AG04449 (cell line): ENCODE measurements at regions of chr7 and their contacts with region 1.

Region 1: DNA sequence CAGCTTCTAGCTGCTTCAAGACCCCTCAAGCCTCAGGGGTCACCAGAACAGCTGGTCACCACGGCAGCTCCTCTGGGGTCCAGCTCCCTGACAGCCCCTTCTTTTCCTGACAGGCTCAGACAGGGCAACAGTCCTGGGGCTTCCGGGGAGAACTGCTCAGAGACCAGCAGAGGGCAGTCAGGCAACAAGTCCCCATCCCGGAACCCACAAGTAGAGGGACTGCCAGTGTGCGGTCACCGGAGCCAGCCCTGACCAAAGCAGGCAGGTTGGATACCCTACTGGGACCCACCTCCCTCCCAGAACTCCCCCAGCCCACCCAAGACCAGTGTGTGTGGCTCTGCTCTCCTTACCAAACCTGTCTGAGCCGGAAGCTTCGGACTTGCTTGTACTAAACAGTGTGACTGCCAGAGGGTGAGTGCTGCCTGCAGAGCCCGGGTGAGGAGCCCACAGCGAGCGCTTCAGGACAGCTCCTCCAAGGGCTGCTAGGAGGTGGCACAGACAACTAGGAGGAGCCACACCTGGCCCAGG is 40.3 kb downstream of the YKT6 start:
- DNase-seq: peak; percentile 5
- H3K4me3 ChIP-seq: peak overlapping the region; percentile 6; the same call in 1 of the 2 replicates
- CTCF ChIP-seq: peak; percentile 94

Region 2: GRCh38 chr7:44218418-44219201 is 22.4 kb before region 1 on chr7:
- CTCF ChIA-PET with region 1: interaction called, 14 read pairs
- POLR2A ChIA-PET with region 1: no interaction called
- DNase-seq: no peak
- H3K4me3 ChIP-seq: no peak overlapping the region
- CTCF ChIP-seq: peak; percentile 10

Region 3: GRCh38 chr7:44257618-44258422 is 16.8 kb after region 1 on chr7:
- CTCF ChIA-PET with region 1: interaction called, 40 read pairs
- POLR2A ChIA-PET with region 1: interaction called, 3 read pairs
- DNase-seq: peak; percentile 49
- H3K4me3 ChIP-seq: no peak overlapping the region
- CTCF ChIP-seq: no peak

Region 4: DNA sequence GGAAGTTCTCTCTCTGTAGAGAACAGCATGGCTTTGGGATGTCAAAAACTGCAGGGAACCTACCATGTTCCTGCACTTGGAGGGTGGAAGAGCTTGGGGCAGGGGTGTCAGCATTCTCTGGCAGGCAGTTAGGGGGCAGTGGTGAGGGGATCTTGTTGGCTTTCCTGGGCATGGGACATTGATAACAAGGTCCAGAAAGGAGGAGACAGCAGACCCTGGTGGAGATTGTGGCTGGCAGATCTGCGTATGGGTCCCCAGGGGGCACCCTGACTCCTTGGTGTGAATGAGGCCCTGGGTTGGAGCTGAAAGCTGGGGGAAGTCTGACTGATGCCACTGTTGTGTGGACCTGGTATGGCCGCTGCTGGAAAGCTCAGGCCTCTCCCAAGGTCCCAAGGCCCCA is 107.3 kb after region 1 on chr7:
- CTCF ChIA-PET with region 1: interaction called, 10 read pairs
- POLR2A ChIA-PET with region 1: no interaction called
- DNase-seq: no peak
- H3K4me3 ChIP-seq: no peak overlapping the region
- CTCF ChIP-seq: peak; percentile 65

Region 5: GRCh38 chr7:44477063-44477830 is 236.2 kb after region 1 on chr7:
- CTCF ChIA-PET with region 1: interaction called, 45 read pairs
- POLR2A ChIA-PET with region 1: no interaction called
- DNase-seq: no peak
- H3K4me3 ChIP-seq: no peak overlapping the region
- CTCF ChIP-seq: peak; percentile 92

Region 6: DNA sequence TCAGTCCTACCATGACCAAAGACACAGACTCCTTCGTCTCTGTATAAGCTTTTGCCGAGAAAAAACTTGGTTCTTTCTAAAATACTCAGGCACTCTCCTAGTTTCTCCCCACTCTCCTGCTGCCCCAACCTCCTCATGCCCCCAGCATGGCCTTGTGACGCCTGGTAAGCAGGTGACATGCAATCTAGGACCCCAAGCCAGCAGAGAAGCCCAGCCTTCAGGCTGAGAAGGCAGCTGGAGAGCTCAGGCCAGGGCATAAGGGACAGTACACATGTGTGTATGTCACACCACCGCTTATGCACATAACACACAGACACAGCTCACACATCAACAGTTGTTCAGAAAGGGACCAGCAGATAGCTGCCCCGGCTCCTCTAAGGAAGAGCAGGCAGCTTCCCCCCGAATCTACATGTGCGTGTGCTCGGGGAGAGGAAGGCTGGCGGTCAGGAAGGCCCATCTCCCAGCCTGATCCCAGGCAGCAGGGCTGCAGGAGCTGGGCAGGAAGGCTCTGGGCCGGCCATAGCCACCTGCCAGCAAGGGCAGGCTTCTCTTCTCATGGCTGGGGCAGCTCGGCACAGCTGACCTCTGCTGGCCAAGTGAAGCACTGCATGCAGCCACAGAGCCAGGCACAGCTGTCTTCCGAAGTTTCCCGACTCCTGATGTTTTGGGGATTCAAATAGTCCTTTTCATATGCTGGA is 324.2 kb after region 1 on chr7:
- CTCF ChIA-PET with region 1: interaction called, 63 read pairs
- POLR2A ChIA-PET with region 1: no interaction called
- DNase-seq: no peak
- H3K4me3 ChIP-seq: no peak overlapping the region
- CTCF ChIP-seq: peak; percentile 97